Posterior vena cava (tissue), 2 donors: ENCODE measurements at regions of chr9 and their contacts with region 1.

Region 1: GRCh38 chr9:13189362-13189761 is 90.1 kb downstream of the MPDZ start:
- DNase-seq: no peak

Region 2: GRCh38 chr9:13149454-13149853 is 39.9 kb before region 1 on chr9:
- intact Hi-C with region 1: loop called in 1 of 2 experiments (anchors 2 kb)
- DNase-seq: no peak